Mammary epithelial cell (primary cell): ENCODE measurements at regions of chr1 and their contacts with region 1.

Region 1: GRCh38 chr1:156383023-156383422 is 14.0 kb downstream of the RHBG start:
- DNase-seq: peak; percentile 35
- H3K4me3 ChIP-seq: no peak overlapping the region
- H3K27ac ChIP-seq: no peak overlapping the region
- H3K4me1 ChIP-seq: no peaks in the 10 kb centered on the region
- H3K27me3 ChIP-seq: peaks cover 4% of the 10 kb centered on the region
- CTCF ChIP-seq: peak; percentile 87 to 93

Region 2: GRCh38 chr1:156090822-156091188 is 292.2 kb before region 1 on chr1:
- CTCF ChIA-PET with region 1: no interaction called
- dilution Hi-C with region 1: no loop called
- in situ Hi-C with region 1: no loop called
- intact Hi-C with region 1: loop called (anchors 5 kb)
- DNase-seq: peak; percentile 71
- H3K4me3 ChIP-seq: no peak overlapping the region
- H3K27ac ChIP-seq: no peak overlapping the region
- H3K4me1 ChIP-seq: peaks cover 4% of the 10 kb centered on the region
- H3K27me3 ChIP-seq: no peaks in the 10 kb centered on the region
- CTCF ChIP-seq: peak; percentile 57 to 81

Region 3: GRCh38 chr1:156368889-156369684 is 13.9 kb before region 1 on chr1 and contains the start of gene RHBG:
- CTCF ChIA-PET with region 1: interaction called, 12 read pairs
- dilution Hi-C with region 1: no loop called
- in situ Hi-C with region 1: no loop called
- intact Hi-C with region 1: no loop called
- DNase-seq: peak; percentile 35
- H3K4me3 ChIP-seq: peak within 1 kb of the TSS; percentile 41 to 58 (median 56)
- H3K27ac ChIP-seq: no peak within 1 kb of the TSS
- H3K4me1 ChIP-seq: peaks cover 5% of the 10 kb centered on the region
- H3K27me3 ChIP-seq: no peaks in the 10 kb centered on the region
- CTCF ChIP-seq: no peak
- total RNA-seq, gene RHBG: not detected

Region 4: DNA sequence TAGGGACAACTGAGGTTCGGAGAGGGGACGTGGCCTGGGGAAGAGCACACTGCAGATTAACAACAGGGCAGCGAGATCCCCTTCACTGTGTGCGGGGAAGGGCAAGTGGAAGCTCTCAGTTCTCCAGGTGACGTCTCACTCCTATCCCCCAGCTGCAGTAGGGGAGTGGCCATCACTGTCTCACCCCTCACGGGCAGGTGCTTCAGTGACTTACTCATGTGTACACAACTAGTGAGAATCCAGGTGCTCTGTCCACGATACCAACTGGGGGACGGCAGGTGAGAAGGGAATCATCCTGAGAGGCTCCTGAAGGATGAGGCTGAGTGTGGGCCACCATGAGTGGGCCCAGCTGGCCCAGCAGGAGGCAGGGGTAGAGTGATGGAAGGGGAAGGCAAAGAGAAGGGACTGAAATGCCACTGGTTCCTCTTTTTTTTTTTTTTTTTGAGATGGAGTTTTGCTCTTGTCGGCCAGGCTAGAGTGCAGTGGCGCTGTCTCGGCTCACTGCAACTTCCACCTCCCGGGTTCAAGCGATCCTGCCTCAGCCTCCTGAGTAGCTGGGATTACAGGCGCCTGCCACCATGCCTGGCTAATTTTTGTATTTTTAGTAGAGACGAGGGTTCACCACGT is 11.9 kb after region 1 on chr1:
- CTCF ChIA-PET with region 1: no interaction called
- dilution Hi-C with region 1: no loop called
- in situ Hi-C with region 1: no loop called
- intact Hi-C with region 1: no loop called
- DNase-seq: no peak
- H3K4me3 ChIP-seq: no peak overlapping the region
- H3K27ac ChIP-seq: no peak overlapping the region
- H3K4me1 ChIP-seq: no peaks in the 10 kb centered on the region
- H3K27me3 ChIP-seq: no peaks in the 10 kb centered on the region
- CTCF ChIP-seq: no peak

Region 5: GRCh38 chr1:156407344-156407743 is 24.3 kb after region 1 on chr1:
- CTCF ChIA-PET with region 1: no interaction called
- dilution Hi-C with region 1: no loop called
- in situ Hi-C with region 1: no loop called
- intact Hi-C with region 1: no loop called
- DNase-seq: no peak
- H3K4me3 ChIP-seq: no peak overlapping the region
- H3K27ac ChIP-seq: no peak overlapping the region
- H3K4me1 ChIP-seq: no peaks in the 10 kb centered on the region
- H3K27me3 ChIP-seq: peaks cover 5% of the 10 kb centered on the region
- CTCF ChIP-seq: no peak

Region 6: DNA sequence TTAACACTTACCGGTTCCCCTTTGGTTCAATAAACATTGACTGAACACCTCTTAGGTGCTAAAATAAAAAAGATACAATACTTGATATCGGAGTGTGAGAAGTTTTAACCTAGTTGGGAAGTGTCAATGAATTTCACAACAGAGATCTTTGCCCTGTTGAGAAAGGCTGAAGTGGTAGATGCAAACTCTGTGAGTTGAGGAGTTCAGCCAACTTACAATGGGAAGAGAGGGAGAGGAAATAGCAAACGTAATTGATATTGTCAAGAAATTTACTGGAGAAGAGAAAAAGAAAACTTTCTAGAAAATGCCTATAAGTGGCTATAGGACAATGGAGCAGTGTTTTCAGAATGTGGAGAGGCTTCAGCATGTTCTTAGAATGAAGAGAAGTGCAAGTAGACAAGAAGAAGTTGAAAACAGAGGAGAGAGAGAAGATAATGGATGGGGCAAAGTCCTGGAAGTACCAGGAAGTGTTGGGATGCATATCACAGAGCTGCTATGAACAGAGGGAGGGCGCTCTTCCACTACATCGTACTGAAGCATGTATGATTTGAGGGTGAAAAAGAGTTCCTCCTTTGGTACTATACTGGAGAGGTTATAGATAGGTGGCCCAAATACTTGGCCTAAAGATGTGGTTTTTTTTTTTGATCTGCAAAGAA is 68.6 kb after region 1 on chr1:
- CTCF ChIA-PET with region 1: interaction called, 4 read pairs
- dilution Hi-C with region 1: no loop called
- in situ Hi-C with region 1: loop called in 1 of 2 experiments (anchors 5 kb)
- intact Hi-C with region 1: no loop called
- DNase-seq: no peak
- H3K4me3 ChIP-seq: no peak overlapping the region
- H3K27ac ChIP-seq: no peak overlapping the region
- H3K4me1 ChIP-seq: peaks cover 9% of the 10 kb centered on the region
- H3K27me3 ChIP-seq: no peaks in the 10 kb centered on the region
- CTCF ChIP-seq: no peak

Region 7: GRCh38 chr1:156467385-156467784 is 84.4 kb after region 1 on chr1:
- CTCF ChIA-PET with region 1: no interaction called
- dilution Hi-C with region 1: no loop called
- in situ Hi-C with region 1: no loop called
- intact Hi-C with region 1: no loop called
- DNase-seq: no peak
- H3K4me3 ChIP-seq: no peak overlapping the region
- H3K27ac ChIP-seq: no peak overlapping the region
- H3K4me1 ChIP-seq: peaks cover under 1% of the 10 kb centered on the region
- H3K27me3 ChIP-seq: no peaks in the 10 kb centered on the region
- CTCF ChIP-seq: no peak

Region 8: GRCh38 chr1:156583821-156584622 is 201.0 kb after region 1 on chr1:
- CTCF ChIA-PET with region 1: no interaction called
- dilution Hi-C with region 1: no loop called
- in situ Hi-C with region 1: no loop called
- intact Hi-C with region 1: loop called (anchors 5 kb)
- DNase-seq: peak; percentile 56
- H3K4me3 ChIP-seq: no peak overlapping the region
- H3K27ac ChIP-seq: no peak overlapping the region
- H3K4me1 ChIP-seq: no peaks in the 10 kb centered on the region
- H3K27me3 ChIP-seq: no peaks in the 10 kb centered on the region
- CTCF ChIP-seq: peak; percentile 89

Region 9: GRCh38 chr1:156608036-156608674 is 225.1 kb after region 1 on chr1:
- CTCF ChIA-PET with region 1: no interaction called
- dilution Hi-C with region 1: no loop called
- in situ Hi-C with region 1: no loop called
- intact Hi-C with region 1: loop called (anchors 1 kb)
- DNase-seq: peak; percentile 60
- H3K4me3 ChIP-seq: no peak overlapping the region
- H3K27ac ChIP-seq: no peak overlapping the region
- H3K4me1 ChIP-seq: peaks cover under 1% of the 10 kb centered on the region
- H3K27me3 ChIP-seq: no peaks in the 10 kb centered on the region
- CTCF ChIP-seq: peak; percentile 85 to 95